Activated CD8-positive, alpha-beta T cell treated with anti-CD3 and anti-CD28 coated beads for 36 hours (primary cell): ENCODE measurements at regions of chr15 and their contacts with region 1.

Region 1: GRCh38 chr15:38690689-38691332 is 126.2 kb upstream of the RASGRP1 start:
- DNase-seq: peak; percentile 88
- ATAC-seq: peak; percentile 38
- H3K4me3 Mint-ChIP-seq: no peak overlapping the region
- H3K27ac Mint-ChIP-seq: peak overlapping the region; percentile 62
- H3K4me1 Mint-ChIP-seq: peaks cover 71% of the 10 kb centered on the region
- H3K27me3 Mint-ChIP-seq: no peaks in the 10 kb centered on the region
- CTCF ChIP-seq: peak; percentile 91

Region 2: DNA sequence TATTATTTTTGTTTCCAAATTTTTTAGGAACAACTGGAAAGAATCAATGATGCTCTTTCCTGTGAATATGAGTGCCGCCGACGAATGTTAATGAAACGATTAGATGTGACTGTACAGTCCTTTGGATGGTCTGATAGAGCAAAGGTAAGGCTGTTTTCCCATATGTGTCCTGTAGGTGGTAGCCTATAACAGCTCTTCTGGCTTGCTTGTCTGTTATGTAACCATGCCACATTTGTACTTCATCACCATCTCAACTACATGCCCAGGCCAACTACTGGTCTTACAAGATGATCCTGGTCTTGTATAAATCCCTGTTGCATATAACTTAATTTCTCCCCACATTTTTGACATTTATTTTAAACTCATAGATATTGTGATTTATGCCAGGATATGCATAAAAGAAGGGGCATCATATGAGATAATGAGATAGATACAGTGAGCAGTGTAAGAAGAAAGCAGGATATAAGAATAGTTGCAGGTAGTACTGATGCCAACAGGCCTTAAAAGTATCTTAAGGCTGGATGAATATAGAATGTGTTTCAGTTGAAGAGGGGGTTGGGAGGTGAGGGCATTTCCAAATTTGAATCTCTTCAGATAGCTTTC is 216.6 kb before region 1 on chr15:
- CTCF ChIA-PET with region 1: interaction called, 108 read pairs
- POLR2A ChIA-PET with region 1: interaction called, 5 read pairs
- intact Hi-C with region 1: no loop called
- DNase-seq: peak; percentile 24
- ATAC-seq: peak; percentile 97
- H3K4me3 Mint-ChIP-seq: no peak overlapping the region
- H3K27ac Mint-ChIP-seq: no peak overlapping the region
- H3K4me1 Mint-ChIP-seq: peaks cover 2% of the 10 kb centered on the region
- H3K27me3 Mint-ChIP-seq: no peaks in the 10 kb centered on the region
- CTCF ChIP-seq: peak; percentile 79

Region 3: DNA sequence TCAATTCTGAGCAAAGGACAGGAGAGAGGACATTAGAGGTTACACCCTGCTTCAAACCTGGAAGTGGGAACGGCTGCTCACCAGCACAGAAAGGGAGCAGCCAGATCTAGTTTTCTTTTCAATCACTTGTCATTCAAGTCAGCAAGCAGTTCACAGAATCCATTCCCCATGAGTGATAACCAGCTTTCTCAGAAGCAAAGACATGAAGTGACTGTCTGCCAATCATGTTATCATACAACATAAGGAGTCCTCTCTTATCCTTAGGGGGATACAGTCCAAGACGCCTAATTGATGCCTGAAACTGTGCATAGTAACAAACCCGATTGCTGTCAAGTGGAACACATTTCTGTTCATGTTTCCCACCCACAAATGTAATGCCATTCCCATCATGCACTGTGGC is 182.2 kb before region 1 on chr15:
- CTCF ChIA-PET with region 1: interaction called, 46 read pairs
- POLR2A ChIA-PET with region 1: interaction called, 5 read pairs
- intact Hi-C with region 1: no loop called
- DNase-seq: peak; percentile 33
- ATAC-seq: peak; percentile 78
- H3K4me3 Mint-ChIP-seq: no peak overlapping the region
- H3K27ac Mint-ChIP-seq: peak overlapping the region; percentile 93
- H3K4me1 Mint-ChIP-seq: peaks cover 38% of the 10 kb centered on the region
- H3K27me3 Mint-ChIP-seq: no peaks in the 10 kb centered on the region
- CTCF ChIP-seq: no peak

Region 4: DNA sequence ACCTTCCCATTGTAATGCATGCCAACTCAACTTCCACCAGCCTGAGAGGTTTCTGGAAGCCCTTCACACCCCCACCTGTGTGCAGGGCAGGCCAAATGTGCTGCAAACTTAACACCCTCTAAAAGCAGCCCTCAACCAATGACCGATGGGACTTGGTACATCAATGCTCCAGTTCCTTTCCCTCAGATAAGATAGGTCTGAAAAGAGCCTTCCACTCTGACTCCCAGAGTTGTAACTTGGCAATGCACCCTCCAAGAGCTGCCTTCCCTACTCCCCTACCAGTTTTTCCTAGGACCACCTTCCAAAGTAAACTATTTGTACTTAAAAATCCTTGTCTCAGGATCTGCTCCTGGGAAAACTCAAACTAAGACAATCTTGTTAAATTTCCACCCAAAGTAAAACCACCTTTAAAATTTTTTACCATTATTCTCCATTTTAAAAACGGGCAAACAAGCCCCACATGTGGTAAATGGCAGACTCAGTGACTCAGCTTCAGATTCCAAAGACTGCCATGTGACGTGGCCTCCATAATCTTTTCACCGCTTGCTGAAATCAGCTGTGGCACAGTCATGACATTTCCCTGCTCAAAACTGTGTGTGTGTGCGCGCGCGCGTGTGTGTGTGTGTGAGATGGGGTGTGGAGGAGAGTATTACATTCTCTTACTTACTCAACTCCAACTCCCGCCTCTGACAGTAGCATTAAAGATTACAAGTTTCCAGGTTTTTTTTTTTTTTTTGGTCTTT is 143.4 kb before region 1 on chr15:
- CTCF ChIA-PET with region 1: interaction called, 73 read pairs
- POLR2A ChIA-PET with region 1: no interaction called
- intact Hi-C with region 1: no loop called
- DNase-seq: peak; percentile 65
- ATAC-seq: no peak
- H3K4me3 Mint-ChIP-seq: no peak overlapping the region
- H3K27ac Mint-ChIP-seq: peak overlapping the region; percentile 69
- H3K4me1 Mint-ChIP-seq: peaks cover 83% of the 10 kb centered on the region
- H3K27me3 Mint-ChIP-seq: no peaks in the 10 kb centered on the region
- CTCF ChIP-seq: no peak

Region 5: GRCh38 chr15:38624244-38625205 is 66.3 kb before region 1 on chr15:
- CTCF ChIA-PET with region 1: interaction called, 12 read pairs
- POLR2A ChIA-PET with region 1: interaction called, 3 read pairs
- intact Hi-C with region 1: no loop called
- DNase-seq: no peak
- ATAC-seq: no peak
- H3K4me3 Mint-ChIP-seq: no peak overlapping the region
- H3K27ac Mint-ChIP-seq: no peak overlapping the region
- H3K4me1 Mint-ChIP-seq: peaks cover 33% of the 10 kb centered on the region
- H3K27me3 Mint-ChIP-seq: no peaks in the 10 kb centered on the region
- CTCF ChIP-seq: no peak

Region 6: GRCh38 chr15:38707802-38708671 is 17.2 kb after region 1 on chr15:
- CTCF ChIA-PET with region 1: interaction called, 22 read pairs
- POLR2A ChIA-PET with region 1: no interaction called
- intact Hi-C with region 1: no loop called
- DNase-seq: peak; percentile 52
- ATAC-seq: peak; percentile 91
- H3K4me3 Mint-ChIP-seq: no peak overlapping the region
- H3K27ac Mint-ChIP-seq: no peak overlapping the region
- H3K4me1 Mint-ChIP-seq: peaks cover 10% of the 10 kb centered on the region
- H3K27me3 Mint-ChIP-seq: peaks cover 6% of the 10 kb centered on the region
- CTCF ChIP-seq: peak; percentile 92

Region 7: GRCh38 chr15:39054128-39054732 is 363.4 kb after region 1 on chr15:
- CTCF ChIA-PET with region 1: no interaction called
- POLR2A ChIA-PET with region 1: no interaction called
- intact Hi-C with region 1: no loop called
- DNase-seq: no peak
- ATAC-seq: no peak
- H3K4me3 Mint-ChIP-seq: no peak overlapping the region
- H3K27ac Mint-ChIP-seq: no peak overlapping the region
- H3K4me1 Mint-ChIP-seq: no peaks in the 10 kb centered on the region
- H3K27me3 Mint-ChIP-seq: peaks cover 4% of the 10 kb centered on the region
- CTCF ChIP-seq: no peak